PC-9 (cell line): ENCODE measurements at regions of chr16 and their contacts with region 1.

Region 1: GRCh38 chr16:30934827-30935557 is 11.6 kb downstream of the FBXL19 start:
- DNase-seq: peak in 1 of 2 experiments; percentile 57
- H3K4me3 ChIP-seq: no peak overlapping the region
- H3K27ac ChIP-seq: no peak overlapping the region
- H3K4me1 ChIP-seq: no peaks in the 10 kb centered on the region
- H3K27me3 ChIP-seq: no peaks in the 10 kb centered on the region
- CTCF ChIP-seq: peak; percentile 73

Region 2: DNA sequence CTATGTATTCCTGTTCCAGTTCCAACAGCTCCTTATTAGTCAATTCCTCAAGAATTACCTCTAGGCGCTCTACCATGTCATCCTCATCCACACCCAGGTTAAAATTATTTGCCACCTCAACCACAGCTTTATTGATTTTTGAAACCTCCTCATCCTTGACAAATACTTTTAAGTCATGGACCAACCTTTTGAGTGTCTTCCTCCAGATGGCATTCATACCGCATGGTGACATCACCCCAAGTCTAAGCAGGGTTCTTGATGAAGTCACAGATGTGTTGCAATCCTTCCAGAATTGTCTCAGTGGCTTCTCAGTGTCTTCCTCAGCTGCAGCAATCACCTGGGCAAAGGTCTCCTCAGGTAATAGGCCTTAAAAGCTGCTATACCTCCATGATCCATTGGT is 81.2 kb before region 1 on chr16:
- CTCF ChIA-PET with region 1: interaction called, 13 read pairs
- POLR2A ChIA-PET with region 1: interaction called, 3 read pairs
- intact Hi-C with region 1: no loop called
- DNase-seq: peak in 1 of 2 experiments; percentile 95
- H3K4me3 ChIP-seq: no peak overlapping the region
- H3K27ac ChIP-seq: no peak overlapping the region; the same call in 1 of the 2 replicates
- H3K4me1 ChIP-seq: peaks cover 46% of the 10 kb centered on the region
- H3K27me3 ChIP-seq: no peaks in the 10 kb centered on the region
- CTCF ChIP-seq: no peak